WTC11 (cell line): ENCODE measurements at regions of chr6 and their contacts with region 1.

Region 1: DNA sequence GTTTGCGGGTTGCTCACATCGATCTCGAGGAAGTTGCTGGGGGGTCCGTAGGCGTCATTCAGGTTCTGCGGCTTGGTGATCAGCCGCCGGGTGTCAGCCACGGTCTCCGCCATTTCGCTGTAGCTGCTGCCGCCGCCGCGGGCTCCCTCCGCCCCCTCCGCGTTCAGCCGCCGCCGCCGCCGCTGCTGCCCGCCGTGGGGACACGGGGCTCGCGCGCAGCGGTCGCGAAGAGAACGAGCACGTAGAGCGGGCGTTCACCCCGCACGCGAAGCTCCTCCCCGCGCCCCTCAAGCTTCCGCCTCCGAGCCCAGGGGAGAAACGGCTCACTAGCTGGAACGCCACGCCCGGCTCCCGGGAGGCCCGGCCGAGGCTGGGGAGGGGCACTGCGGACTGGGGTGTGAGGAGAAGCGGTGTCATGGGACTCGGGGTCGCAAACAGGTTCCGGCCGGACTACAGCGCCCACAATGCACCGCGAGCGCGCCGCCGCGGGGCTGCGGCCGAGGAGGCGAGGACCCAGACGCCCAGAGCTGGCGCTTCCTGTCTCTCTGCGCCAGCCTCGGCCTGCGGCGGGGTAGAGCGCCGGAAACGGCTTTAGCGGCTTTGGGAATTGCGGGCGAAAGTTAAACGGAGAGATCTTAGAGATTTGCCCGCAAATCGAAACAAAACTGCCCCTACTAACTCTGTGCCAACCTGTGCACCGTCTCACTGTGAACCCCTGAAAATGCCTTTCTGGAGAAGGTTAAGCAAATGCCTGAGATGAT is at the start of gene SNX3:
- DNase-seq: peak; percentile 95
- ATAC-seq: peak; percentile 94
- H3K4me3 Mint-ChIP-seq: peak within 1 kb of the TSS; percentile 92
- H3K27ac Mint-ChIP-seq: peak within 1 kb of the TSS; percentile 100
- H3K4me1 Mint-ChIP-seq: peaks cover 4% of the 10 kb centered on the region
- H3K27me3 Mint-ChIP-seq: no peaks in the 10 kb centered on the region
- CTCF ChIP-seq: no peak
- total RNA-seq, gene SNX3: 65.1 to 66.1 TPM (median 65.5 TPM) in 3 replicates

Region 2: GRCh38 chr6:107418118-107418517 is 842.9 kb before region 1 on chr6:
- CTCF ChIA-PET with region 1: no interaction called
- POLR2A ChIA-PET with region 1: no interaction called
- DNase-seq: no peak
- ATAC-seq: peak; percentile 87
- H3K4me3 Mint-ChIP-seq: no peak overlapping the region
- H3K27ac Mint-ChIP-seq: peak overlapping the region; percentile 6; the same call in 1 of the 2 replicates
- H3K4me1 Mint-ChIP-seq: peaks cover 43% of the 10 kb centered on the region
- H3K27me3 Mint-ChIP-seq: no peaks in the 10 kb centered on the region
- CTCF ChIP-seq: peak; percentile 48

Region 3: GRCh38 chr6:108294727-108295625 is 34.0 kb after region 1 on chr6 and contains the start of gene AFG1L:
- CTCF ChIA-PET with region 1: interaction called, 3 read pairs
- POLR2A ChIA-PET with region 1: interaction called, 11 read pairs
- DNase-seq: peak; percentile 95
- ATAC-seq: peak; percentile 93
- H3K4me3 Mint-ChIP-seq: peak within 1 kb of the TSS; percentile 99
- H3K27ac Mint-ChIP-seq: peak within 1 kb of the TSS; percentile 98
- H3K4me1 Mint-ChIP-seq: peaks cover 10% of the 10 kb centered on the region
- H3K27me3 Mint-ChIP-seq: no peaks in the 10 kb centered on the region
- CTCF ChIP-seq: no peak
- total RNA-seq, gene AFG1L: 7.2 to 8.7 TPM (median 7.9 TPM) in 3 replicates